A673 (cell line): ENCODE measurements at regions of chr1 and their contacts with region 1.

Region 1: GRCh38 chr1:13813398-13814012 is 113.5 kb downstream of the PRDM2 start:
- DNase-seq: peak; percentile 21
- H3K4me3 ChIP-seq: no peak overlapping the region
- H3K27ac ChIP-seq: no peak overlapping the region
- H3K4me1 ChIP-seq: peaks cover 8% of the 10 kb centered on the region
- H3K27me3 ChIP-seq: no peaks in the 10 kb centered on the region
- CTCF ChIP-seq: peak; percentile 50

Region 2: GRCh38 chr1:13550663-13551062 is 262.8 kb before region 1 on chr1:
- CTCF ChIA-PET with region 1: no interaction called
- POLR2A ChIA-PET with region 1: no interaction called
- intact Hi-C with region 1: no loop called
- DNase-seq: no peak
- H3K4me3 ChIP-seq: no peak overlapping the region
- H3K27ac ChIP-seq: no peak overlapping the region
- H3K4me1 ChIP-seq: no peaks in the 10 kb centered on the region
- H3K27me3 ChIP-seq: no peaks in the 10 kb centered on the region
- CTCF ChIP-seq: no peak

Region 3: DNA sequence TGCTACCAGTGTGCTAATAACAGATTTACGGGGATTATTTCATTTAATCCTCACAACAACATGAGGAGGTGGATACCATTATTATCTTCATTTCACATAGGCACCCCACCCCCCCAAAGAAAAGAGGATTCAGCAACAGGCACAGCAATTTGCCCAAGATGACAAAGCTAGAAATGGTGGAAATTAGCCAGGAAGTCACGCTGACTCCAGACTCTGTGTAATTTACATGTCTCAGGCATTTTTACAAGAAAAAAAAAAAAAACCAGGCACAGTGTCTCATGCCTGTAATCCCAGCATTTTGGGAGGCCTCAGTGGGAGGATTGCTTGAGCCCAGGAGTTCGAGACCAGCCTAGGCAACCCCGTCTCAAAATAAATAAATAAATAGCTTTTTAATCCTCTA is 151.0 kb before region 1 on chr1:
- CTCF ChIA-PET with region 1: no interaction called
- POLR2A ChIA-PET with region 1: no interaction called
- intact Hi-C with region 1: loop called (anchors 2 kb)
- DNase-seq: peak; percentile 95
- H3K4me3 ChIP-seq: no peak overlapping the region
- H3K27ac ChIP-seq: peak overlapping the region; percentile 73
- H3K4me1 ChIP-seq: peaks cover 34% of the 10 kb centered on the region
- H3K27me3 ChIP-seq: no peaks in the 10 kb centered on the region
- CTCF ChIP-seq: no peak

Region 4: DNA sequence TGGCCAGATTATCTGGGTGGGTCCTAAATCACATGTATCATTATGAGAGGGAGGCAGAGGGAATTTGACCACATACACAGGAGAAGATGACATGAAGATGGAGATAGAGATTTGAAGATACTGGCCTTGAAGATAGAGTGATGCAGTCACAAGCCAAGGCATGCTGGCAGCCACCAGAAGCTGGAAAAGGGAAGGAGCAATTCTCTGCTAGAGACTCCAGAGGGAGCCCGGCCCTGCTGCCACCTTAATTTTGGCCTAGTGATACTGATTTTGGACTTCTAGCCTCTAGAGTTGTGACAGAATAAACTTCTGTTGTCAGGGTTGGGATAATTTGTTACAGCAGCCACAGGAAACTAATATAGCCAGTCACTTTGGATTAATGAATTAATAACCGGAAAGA is 115.8 kb before region 1 on chr1:
- CTCF ChIA-PET with region 1: no interaction called
- POLR2A ChIA-PET with region 1: interaction called, 22 read pairs
- intact Hi-C with region 1: no loop called
- DNase-seq: no peak
- H3K4me3 ChIP-seq: no peak overlapping the region
- H3K27ac ChIP-seq: no peak overlapping the region
- H3K4me1 ChIP-seq: peaks cover 19% of the 10 kb centered on the region
- H3K27me3 ChIP-seq: no peaks in the 10 kb centered on the region
- CTCF ChIP-seq: no peak